GM10248 (cell line): ENCODE measurements at regions of chr5 and their contacts with region 1.

Region 1: DNA sequence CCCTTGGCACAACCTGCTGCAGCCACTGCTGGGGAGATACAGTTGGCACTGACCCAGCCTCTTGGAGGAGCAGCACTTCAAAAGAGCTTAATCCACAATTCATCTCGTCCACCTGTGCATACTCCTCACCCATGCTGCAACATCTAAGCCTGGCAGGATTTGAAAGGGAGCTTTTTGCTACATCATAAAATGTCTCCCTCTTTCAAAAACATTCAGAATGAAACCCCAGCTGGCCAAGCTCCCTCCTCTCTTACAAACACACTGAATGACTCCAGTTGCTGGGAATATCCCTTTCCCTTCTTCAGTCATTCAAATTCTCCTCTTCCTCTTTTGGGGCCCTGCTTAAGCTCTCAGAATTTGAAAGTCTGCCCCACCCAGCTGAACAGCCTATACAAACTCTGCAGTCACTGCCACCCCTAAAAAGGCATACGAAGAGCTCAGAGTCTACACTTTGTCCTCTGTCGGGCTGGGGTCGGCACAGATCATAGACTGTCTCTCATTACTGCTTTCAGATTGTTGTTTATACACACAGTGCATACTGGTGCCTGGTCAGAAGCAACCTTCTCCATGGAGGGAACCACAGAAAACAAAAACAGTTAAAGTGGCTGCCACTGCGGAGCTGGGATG is 8.8 kb upstream of the C5orf15 start:
- DNase-seq: peak; percentile 34
- CTCF ChIP-seq: no peak

Region 2: DNA sequence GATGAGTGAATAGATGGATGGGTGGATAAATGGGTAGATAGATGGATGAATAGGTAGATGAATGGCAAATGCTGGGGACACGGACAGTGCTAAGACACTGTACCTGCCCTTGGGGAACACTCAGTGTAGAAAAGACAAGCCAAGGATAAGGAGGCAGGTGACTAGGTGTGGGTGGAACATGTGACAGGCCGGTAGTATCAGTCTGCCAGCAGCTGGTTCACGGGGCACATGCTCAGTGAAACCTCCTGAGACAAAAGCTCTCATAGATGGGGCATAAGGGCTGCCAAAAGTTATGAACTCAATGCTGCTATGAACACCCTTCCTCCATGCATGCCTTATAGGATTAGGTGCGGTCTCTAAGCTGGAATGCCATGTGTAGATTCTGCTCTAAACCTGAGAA is 79.8 kb before region 1 on chr5:
- CTCF ChIA-PET with region 1: no interaction called
- POLR2A ChIA-PET with region 1: no interaction called
- DNase-seq: no peak
- CTCF ChIP-seq: no peak

Region 3: DNA sequence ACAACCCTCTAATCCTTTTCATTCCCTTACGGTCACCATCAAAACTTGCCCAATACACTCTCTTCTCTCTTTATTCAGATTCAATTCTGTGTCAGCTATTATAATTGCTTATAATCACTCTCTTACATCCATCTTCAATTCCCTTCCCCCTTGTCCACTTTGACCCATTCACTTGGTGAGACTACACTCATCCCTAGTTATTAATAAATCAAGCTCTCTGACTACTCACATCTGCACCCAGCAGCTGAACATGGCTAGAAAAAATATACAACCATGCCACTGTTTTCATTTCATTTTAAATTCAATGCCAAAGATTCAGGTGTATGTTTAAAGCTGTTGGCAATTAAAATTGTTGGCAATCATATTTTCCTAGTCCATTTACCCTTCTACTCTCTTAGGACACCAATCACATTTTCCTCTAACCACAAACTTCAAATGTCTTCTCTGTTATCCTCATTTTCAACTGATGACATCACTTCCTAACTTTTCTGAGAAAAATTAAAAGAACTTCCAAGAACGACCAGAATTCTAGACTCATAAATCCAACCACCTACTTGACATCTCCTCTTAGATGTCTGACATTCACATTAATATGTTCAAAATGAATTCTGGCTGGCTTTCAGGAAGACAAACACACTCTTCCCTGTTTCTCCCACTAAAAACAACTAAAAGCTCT is 14.3 kb before region 1 on chr5:
- CTCF ChIA-PET with region 1: interaction called, 10 read pairs
- POLR2A ChIA-PET with region 1: no interaction called
- DNase-seq: no peak
- CTCF ChIP-seq: no peak

Region 4: GRCh38 chr5:134145779-134146581 is 168.7 kb after region 1 on chr5:
- CTCF ChIA-PET with region 1: no interaction called
- POLR2A ChIA-PET with region 1: no interaction called
- DNase-seq: peak; percentile 79
- CTCF ChIP-seq: peak; percentile 98